ENCODE measurements at regions of chr1 and their contacts with region 1.

Region 1: GRCh38 chr1:10032590-10033358 is at the start of gene UBE4B:
- DNase-seq: peak; percentile 98
- H3K4me3 ChIP-seq: peak within 1 kb of the TSS; percentile 93 to 96
- H3K27ac ChIP-seq: peak within 1 kb of the TSS; percentile 96 to 98
- H3K4me1 ChIP-seq: no peaks in the 10 kb centered on the region
- H3K27me3 ChIP-seq: no peaks in the 10 kb centered on the region
- CTCF ChIP-seq: peak; percentile 85 to 97 (median 94)
- POLR2A ChIP-seq: peak; percentile 37
- total RNA-seq, gene UBE4B: 49.0 to 68.1 TPM

Region 2: DNA sequence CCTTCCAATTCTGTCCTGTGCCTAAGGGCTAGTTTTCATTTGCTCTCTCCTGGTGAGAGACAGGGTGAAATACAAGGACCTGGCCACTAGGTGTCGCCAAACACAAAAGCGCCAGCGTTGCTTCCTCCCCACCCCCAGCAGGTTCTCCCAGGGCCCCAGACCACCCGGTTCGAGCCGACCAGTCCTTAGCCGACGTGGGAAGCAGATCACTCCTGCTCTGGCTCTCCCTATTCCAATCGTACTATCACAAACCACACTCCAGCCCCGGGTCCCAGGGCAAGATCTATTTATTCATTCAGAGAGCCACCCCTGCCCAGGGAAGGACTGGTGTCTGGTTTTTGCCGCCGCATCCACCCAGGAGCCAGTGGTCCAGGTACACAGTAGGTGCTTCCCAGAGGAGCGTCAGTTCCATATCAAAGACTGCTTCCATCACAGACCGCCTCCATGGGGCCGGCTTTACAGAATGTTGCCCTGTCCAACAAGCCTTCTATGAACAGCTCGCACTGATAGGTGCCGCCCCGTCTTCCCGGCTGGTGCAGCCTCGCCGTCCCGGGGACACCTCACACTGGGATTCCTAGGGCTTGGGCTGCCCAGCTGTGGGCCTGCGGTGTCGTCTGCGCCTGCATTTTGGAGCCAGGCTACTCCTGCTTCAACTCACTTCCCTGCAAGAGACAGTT is 157.7 kb before region 1 on chr1:
- intact Hi-C with region 1: loop called (anchors 2 kb)
- DNase-seq: peak; percentile 56
- H3K4me3 ChIP-seq: no peak overlapping the region
- H3K27ac ChIP-seq: peak overlapping the region; percentile 18 to 57
- H3K4me1 ChIP-seq: peaks cover 2% of the 10 kb centered on the region
- H3K27me3 ChIP-seq: no peaks in the 10 kb centered on the region
- CTCF ChIP-seq: peak; percentile 91 to 94 (median 92)
- POLR2A ChIP-seq: no peak

Region 3: DNA sequence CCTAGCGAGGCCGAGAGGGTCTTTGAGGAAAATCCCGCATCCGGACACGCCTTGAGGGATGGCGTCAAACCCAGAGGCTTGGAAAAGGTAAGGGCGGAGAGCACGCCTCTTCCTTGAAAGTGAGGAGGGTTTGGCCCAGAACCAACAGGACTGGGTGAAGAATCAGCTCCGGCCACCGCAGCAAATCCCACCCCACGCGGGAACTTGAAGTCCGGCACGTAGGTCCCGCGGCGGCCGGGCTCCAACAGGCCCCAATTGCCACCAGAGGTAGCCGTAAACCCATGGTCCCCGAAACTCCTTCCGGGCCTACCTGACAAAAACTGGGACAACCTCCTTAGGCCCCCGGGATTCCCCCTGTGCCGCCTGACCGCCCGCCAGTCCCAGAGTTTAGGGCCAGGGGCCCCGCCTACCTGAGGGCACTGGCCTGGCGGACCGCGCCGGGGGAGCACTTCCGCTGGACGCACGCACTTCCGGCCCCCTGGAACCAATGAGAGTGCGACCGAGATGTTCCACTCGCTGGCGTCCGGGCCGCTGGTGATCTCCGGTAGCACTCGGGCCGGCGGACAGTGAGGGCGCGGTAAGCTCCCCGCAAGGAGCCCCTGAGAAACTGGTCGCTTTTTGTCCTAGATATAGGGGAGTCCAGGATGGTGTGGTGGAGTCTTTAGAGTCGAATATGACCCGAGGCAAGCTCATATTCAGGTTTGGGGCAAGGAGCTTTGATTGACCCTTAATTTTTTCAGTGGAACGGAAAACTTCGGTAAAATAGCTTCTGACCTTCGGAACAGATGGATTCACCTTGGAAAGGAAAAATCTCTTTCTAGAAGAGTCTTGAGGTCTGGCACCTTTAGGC is 89.6 kb before region 1 on chr1 and contains the starts of genes LZIC and NMNAT1:
- intact Hi-C with region 1: loop called (anchors 5 kb)
- DNase-seq: peak; percentile 89
- H3K4me3 ChIP-seq: peak within 1 kb of the TSS; percentile 63 to 77
- H3K27ac ChIP-seq: peak within 1 kb of the TSS; percentile 79 to 86
- H3K4me1 ChIP-seq: no peaks in the 10 kb centered on the region
- H3K27me3 ChIP-seq: no peaks in the 10 kb centered on the region
- CTCF ChIP-seq: peak in 2 of 4 experiments; percentile 23 to 40
- POLR2A ChIP-seq: peak; percentile 79
- total RNA-seq, gene LZIC: 21.5 to 42.2 TPM
- total RNA-seq, gene NMNAT1: 7.2 to 8.7 TPM

Region 4: GRCh38 chr1:10108134-10108663 is 75.4 kb after region 1 on chr1:
- intact Hi-C with region 1: loop called (anchors 2 kb)
- DNase-seq: no peak
- H3K4me3 ChIP-seq: no peak overlapping the region
- H3K27ac ChIP-seq: peak overlapping the region; percentile 53 to 70
- H3K4me1 ChIP-seq: peaks cover 15% of the 10 kb centered on the region
- H3K27me3 ChIP-seq: no peaks in the 10 kb centered on the region
- CTCF ChIP-seq: no peak
- POLR2A ChIP-seq: no peak

Region 5: GRCh38 chr1:10121688-10122087 is 88.9 kb after region 1 on chr1:
- intact Hi-C with region 1: loop called (anchors 2 kb)
- DNase-seq: no peak
- H3K4me3 ChIP-seq: no peak overlapping the region
- H3K27ac ChIP-seq: peak overlapping the region in 1 of 2 donors; percentile 33
- H3K4me1 ChIP-seq: peaks cover 3% of the 10 kb centered on the region
- H3K27me3 ChIP-seq: no peaks in the 10 kb centered on the region
- CTCF ChIP-seq: no peak
- POLR2A ChIP-seq: no peak

Region 6: DNA sequence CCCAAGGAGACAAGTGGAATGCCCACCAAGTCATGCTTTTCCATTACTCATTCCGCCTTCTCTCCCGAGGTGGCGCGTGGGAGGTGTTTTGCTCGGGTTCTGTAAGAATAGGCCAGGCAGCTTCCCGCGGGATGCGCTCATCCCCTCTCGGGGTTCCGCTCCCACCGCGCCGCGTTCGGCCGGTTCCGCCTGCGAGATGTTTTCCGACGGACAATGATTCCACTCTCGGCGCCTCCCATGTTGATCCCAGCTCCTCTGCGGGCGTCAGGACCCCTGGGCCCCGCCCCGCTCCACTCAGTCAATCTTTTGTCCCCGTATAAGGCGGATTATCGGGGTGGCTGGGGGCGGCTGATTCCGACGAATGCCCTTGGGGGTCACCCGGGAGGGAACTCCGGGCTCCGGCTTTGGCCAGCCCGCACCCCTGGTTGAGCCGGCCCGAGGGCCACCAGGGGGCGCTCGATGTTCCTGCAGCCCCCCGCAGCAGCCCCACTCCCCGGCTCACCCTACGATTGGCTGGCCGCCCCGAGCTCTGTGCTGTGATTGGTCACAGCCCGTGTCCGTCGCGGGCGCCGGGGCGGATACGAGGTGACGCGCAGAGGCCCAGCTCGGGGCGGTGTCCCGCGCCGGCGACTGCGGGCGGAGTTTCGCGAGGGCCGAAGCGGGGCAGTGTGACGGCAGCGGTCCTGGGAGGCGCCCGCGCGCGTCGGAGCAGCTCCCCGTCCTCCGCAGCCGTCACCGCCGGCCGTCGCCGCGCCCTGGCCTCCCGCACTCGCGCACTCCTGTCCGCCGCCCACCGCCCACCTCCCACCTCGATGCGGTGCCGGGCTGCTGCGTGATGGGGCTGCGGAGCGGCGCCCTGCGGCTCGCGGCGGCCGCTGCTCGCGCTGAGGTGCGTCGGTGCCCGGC is 177.4 kb after region 1 on chr1 and contains the start of gene KIF1B:
- intact Hi-C with region 1: loop called (anchors 5 kb)
- DNase-seq: peak; percentile 99
- H3K4me3 ChIP-seq: peak within 1 kb of the TSS; percentile 87 to 93
- H3K27ac ChIP-seq: peak within 1 kb of the TSS; percentile 96 to 99
- H3K4me1 ChIP-seq: peaks cover 3% of the 10 kb centered on the region
- H3K27me3 ChIP-seq: no peaks in the 10 kb centered on the region
- CTCF ChIP-seq: peak; percentile 99 to 100 (median 99)
- POLR2A ChIP-seq: peak; percentile 100
- total RNA-seq, gene KIF1B: 31.3 to 56.8 TPM